Right lobe of liver (tissue), 6 donors: ENCODE measurements at regions of chr1 and their contacts with region 1.

Region 1: DNA sequence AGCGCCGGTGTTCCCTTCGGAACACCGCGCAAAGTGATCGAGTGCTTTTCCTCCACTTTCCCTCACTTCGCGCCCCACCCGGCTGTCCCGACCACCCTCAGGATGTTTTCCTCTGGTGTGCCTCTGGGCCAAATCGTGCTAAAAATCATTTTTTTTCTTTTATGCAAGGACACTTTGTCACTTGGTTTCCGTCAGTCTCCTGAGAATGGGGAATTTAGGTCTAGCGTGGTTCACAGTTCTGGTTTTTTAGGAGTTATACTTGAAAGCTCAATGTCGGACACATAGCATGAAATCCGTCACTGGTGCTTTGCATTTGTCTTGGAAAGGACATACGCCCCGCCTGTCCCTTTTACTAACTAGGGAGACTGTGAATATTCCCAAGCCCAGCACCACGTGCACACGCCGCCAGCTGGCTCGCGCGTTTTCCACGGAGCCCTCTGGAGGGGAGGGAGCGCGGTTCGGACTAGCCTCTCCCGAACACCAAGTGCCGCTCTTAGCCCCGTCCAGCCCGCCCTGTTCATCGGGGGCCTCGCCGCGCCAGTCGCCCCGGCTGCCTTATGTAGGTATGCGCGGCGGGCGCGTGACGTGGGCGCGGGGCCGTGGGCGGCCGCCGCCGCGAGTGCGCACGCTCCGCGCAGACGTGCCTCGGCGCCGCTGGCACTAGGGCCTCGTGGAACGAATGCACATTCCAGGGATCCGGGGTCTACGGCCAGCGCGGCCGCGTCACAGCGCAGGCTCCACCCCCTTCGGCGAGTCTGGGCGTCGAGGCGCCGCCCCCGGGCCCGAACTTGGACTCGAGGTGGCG is 572 bp upstream of the IRF2BP2 start:
- DNase-seq: peak; percentile 98
- ATAC-seq: peak; percentile 46 to 76 (median 63)
- H3K4me3 ChIP-seq: peak overlapping the region; percentile 30 to 52 (median 51)
- H3K27ac ChIP-seq: peak overlapping the region; percentile 96 to 100 (median 98)
- H3K4me1 ChIP-seq: peaks cover 0 to 33% (median 16%) of the 10 kb centered on the region in 4 donors
- H3K27me3 ChIP-seq: no peaks in the 10 kb centered on the region
- CTCF ChIP-seq: peak in 1 of 4 donors; percentile 17
- POLR2A ChIP-seq: peak; percentile 100

Region 2: DNA sequence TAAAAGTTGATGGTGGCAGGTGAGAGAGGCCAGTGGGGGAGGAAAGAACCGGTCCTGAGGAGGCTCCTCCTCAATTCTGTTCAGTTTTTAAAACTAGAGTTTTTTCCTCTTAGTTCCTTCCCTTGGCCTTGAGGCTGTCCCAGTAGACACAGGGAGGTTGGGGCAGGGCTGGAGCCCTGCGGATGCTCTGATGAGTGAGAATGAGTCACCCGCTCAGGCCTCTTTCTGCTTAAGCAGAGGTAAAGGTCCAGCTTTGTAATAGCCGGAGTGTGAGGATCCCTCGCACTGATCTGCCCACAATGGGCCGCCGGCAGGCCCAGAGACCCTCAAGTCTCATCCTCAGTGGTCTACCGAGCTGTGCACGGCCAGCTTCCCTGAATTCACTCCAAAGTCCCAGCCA is 49.0 kb after region 1 on chr1:
- intact Hi-C with region 1: no loop called
- DNase-seq: no peak
- ATAC-seq: no peak
- H3K4me3 ChIP-seq: no peak overlapping the region
- H3K27ac ChIP-seq: no peak overlapping the region
- H3K4me1 ChIP-seq: peaks cover 0 to 13% (median 6%) of the 10 kb centered on the region in 4 donors
- H3K27me3 ChIP-seq: no peaks in the 10 kb centered on the region
- CTCF ChIP-seq: no peak
- POLR2A ChIP-seq: no peak

Region 3: GRCh38 chr1:234676103-234676594 is 65.6 kb after region 1 on chr1:
- intact Hi-C with region 1: no loop called
- DNase-seq: peak; percentile 78 to 80 (median 79)
- ATAC-seq: peak; percentile 94 to 97 (median 96)
- H3K4me3 ChIP-seq: peak overlapping the region in 2 of 3 donors; percentile 23 to 47
- H3K27ac ChIP-seq: no peak overlapping the region
- H3K4me1 ChIP-seq: peaks cover 0 to 4% (median under 1%) of the 10 kb centered on the region in 4 donors
- H3K27me3 ChIP-seq: no peaks in the 10 kb centered on the region
- CTCF ChIP-seq: no peak
- POLR2A ChIP-seq: peak; percentile 9

Region 4: GRCh38 chr1:234709473-234710228 is 99.1 kb after region 1 on chr1:
- intact Hi-C with region 1: loop called in 1 of 2 experiments (anchors 10 kb)
- DNase-seq: no peak
- ATAC-seq: peak in 2 of 4 donors; percentile 3 to 16
- H3K4me3 ChIP-seq: no peak overlapping the region
- H3K27ac ChIP-seq: no peak overlapping the region
- H3K4me1 ChIP-seq: peaks cover 0 to 25% (median 8%) of the 10 kb centered on the region in 4 donors
- H3K27me3 ChIP-seq: no peaks in the 10 kb centered on the region
- CTCF ChIP-seq: no peak
- POLR2A ChIP-seq: no peak

Region 5: GRCh38 chr1:234716908-234717375 is 106.4 kb after region 1 on chr1:
- intact Hi-C with region 1: loop called (anchors 5 to 10 kb)
- DNase-seq: no peak
- ATAC-seq: peak; percentile 11 to 47 (median 15)
- H3K4me3 ChIP-seq: peak overlapping the region in 2 of 3 donors; percentile 6 to 43
- H3K27ac ChIP-seq: peak overlapping the region; percentile 80 to 99 (median 98)
- H3K4me1 ChIP-seq: peaks cover 0 to 81% (median 26%) of the 10 kb centered on the region in 4 donors
- H3K27me3 ChIP-seq: no peaks in the 10 kb centered on the region
- CTCF ChIP-seq: no peak
- POLR2A ChIP-seq: no peak

Region 6: DNA sequence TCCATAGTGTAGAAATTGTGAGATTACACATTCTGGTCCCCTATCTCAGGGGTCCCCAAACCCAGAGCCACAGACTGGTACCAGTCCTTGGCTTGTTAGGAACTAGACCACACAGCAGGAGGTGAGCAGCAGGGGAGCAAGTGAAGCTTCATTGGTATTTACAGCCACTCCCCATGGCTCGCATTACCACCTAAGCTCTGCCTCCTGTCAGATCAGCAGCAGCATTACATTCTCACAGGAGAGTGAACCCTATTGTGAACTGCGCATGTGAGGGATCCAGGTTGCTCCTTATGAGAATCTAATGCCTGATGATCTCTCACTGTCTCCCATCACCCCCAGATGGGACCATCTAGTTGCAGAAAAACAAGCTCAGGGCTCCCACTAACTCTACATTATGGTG is 229.1 kb after region 1 on chr1:
- intact Hi-C with region 1: loop called in 1 of 2 experiments (anchors 10 kb)
- DNase-seq: no peak
- ATAC-seq: no peak
- H3K4me3 ChIP-seq: no peak overlapping the region
- H3K27ac ChIP-seq: no peak overlapping the region
- H3K4me1 ChIP-seq: peaks cover 0 to 30% (median 12%) of the 10 kb centered on the region in 4 donors
- H3K27me3 ChIP-seq: no peaks in the 10 kb centered on the region
- CTCF ChIP-seq: no peak
- POLR2A ChIP-seq: no peak

Region 7: GRCh38 chr1:234978397-234979295 is 368.1 kb after region 1 on chr1:
- intact Hi-C with region 1: loop called in 1 of 2 experiments (anchors 10 kb)
- DNase-seq: peak; percentile 80 to 92 (median 88)
- ATAC-seq: peak; percentile 39 to 71 (median 54)
- H3K4me3 ChIP-seq: peak overlapping the region in 1 of 3 donors; percentile 5
- H3K27ac ChIP-seq: peak overlapping the region; percentile 95 to 99 (median 98)
- H3K4me1 ChIP-seq: peaks cover 0 to 69% (median 33%) of the 10 kb centered on the region in 4 donors
- H3K27me3 ChIP-seq: no peaks in the 10 kb centered on the region
- CTCF ChIP-seq: peak in 2 of 4 donors; percentile 5 to 11
- POLR2A ChIP-seq: peak; percentile 21

Region 8: GRCh38 chr1:235075188-235075926 is 464.8 kb after region 1 on chr1:
- intact Hi-C with region 1: loop called in 1 of 2 experiments (anchors 10 kb)
- DNase-seq: peak; percentile 67 to 83 (median 74)
- ATAC-seq: peak; percentile 26 to 55 (median 50)
- H3K4me3 ChIP-seq: peak overlapping the region; percentile 3 to 21 (median 19)
- H3K27ac ChIP-seq: peak overlapping the region; percentile 88 to 97 (median 94)
- H3K4me1 ChIP-seq: peaks cover 0 to 77% (median 40%) of the 10 kb centered on the region in 4 donors
- H3K27me3 ChIP-seq: no peaks in the 10 kb centered on the region
- CTCF ChIP-seq: no peak
- POLR2A ChIP-seq: peak; percentile 62